AG04449 (cell line): ENCODE measurements at regions of chr5 and their contacts with region 1.

Region 1: GRCh38 chr5:150560401-150561193 is 52.7 kb downstream of the NDST1 start:
- DNase-seq: no peak
- H3K4me3 ChIP-seq: no peak overlapping the region
- CTCF ChIP-seq: peak; percentile 76

Region 2: DNA sequence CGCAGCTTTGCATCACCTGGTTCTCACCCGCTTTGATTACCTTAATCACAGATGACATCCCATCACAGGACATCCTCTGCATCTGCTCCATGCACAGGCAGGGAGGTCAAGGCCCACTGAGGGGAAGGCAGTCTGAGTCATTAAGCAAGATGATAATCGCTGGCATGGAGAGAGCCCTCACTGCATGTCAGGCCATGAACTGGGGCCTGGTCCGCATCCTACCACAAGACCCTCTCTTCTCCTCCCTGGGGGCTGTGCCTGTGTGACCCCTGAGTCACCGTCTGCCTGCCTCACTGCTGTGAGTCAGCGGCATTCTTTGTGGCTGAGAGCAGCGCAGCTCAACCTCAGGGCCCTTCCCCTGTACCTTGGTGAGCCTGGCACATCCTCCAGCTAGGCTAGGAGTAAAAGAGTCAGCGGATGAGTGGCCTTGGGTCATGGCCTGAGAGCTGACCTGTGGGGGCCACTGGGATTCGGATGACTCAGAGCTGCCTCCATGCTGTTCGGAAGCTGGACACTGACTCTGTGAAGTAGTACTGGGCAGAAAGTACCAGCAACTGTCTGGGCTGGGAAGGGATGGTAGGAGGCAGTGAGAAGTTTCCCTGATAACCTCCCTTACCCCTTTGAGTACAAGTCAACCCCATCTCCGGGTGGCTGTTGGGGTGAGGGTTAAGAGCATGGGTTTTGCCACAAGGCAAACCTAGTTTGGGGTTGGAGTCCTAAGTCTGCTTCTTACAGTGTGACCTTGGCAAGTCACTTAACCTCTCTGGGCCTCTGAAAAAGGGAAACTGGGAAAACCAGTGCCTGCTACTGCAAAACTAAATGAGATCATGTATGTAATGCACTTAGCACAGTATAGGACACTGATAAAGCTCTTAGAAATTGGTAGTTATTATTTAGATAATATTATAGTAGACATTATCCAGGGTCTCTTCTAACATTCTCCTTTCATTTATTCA is 243.3 kb before region 1 on chr5:
- CTCF ChIA-PET with region 1: no interaction called
- POLR2A ChIA-PET with region 1: no interaction called
- DNase-seq: no peak
- H3K4me3 ChIP-seq: no peak overlapping the region
- CTCF ChIP-seq: no peak

Region 3: DNA sequence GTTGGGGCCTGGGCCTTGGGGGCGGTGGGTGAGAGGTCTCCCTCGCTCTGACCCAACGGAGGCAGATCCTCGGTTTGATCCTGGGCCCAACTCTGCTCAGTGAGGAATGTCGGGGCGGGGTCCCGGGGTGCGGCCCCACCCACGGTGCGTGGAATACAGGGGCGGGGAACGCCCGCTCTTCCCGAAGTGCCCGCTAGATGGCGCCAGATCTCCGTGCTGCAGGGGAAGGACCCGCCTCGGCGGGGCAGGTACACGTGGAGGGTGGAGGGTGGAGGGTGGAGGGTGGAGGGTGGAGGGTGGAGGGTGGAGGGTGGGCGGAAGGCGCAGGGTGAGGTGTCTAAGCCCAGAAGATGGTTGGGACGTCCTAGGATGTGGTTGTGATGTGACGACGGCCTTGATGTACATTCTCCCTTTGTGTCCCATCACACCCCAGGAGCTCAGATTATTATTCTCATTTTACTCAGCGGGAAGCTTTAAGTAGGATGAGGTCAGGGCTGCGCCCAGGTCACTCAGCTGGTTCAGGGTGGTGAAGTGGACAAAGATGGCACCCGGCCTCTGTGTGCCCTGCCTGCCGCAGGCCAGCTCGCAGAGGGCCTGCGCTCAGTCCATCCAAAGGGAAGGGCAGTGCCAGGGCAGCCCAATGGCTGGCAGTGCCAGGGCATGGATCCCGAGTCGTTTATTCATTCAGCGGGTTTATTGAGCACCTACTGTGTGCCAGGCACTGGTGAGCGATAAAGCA is 101.6 kb before region 1 on chr5:
- CTCF ChIA-PET with region 1: interaction called, 157 read pairs
- POLR2A ChIA-PET with region 1: interaction called, 3 read pairs
- DNase-seq: no peak
- H3K4me3 ChIP-seq: peak overlapping the region; percentile 18
- CTCF ChIP-seq: peak; percentile 93

Region 4: GRCh38 chr5:150585781-150586341 is 25.3 kb after region 1 on chr5:
- CTCF ChIA-PET with region 1: interaction called, 14 read pairs
- POLR2A ChIA-PET with region 1: no interaction called
- DNase-seq: no peak
- H3K4me3 ChIP-seq: no peak overlapping the region
- CTCF ChIP-seq: no peak

Region 5: GRCh38 chr5:150656191-150657132 is 95.9 kb after region 1 on chr5:
- CTCF ChIA-PET with region 1: interaction called, 366 read pairs
- POLR2A ChIA-PET with region 1: no interaction called
- DNase-seq: no peak
- H3K4me3 ChIP-seq: peak overlapping the region; percentile 59
- CTCF ChIP-seq: peak; percentile 78

Region 6: DNA sequence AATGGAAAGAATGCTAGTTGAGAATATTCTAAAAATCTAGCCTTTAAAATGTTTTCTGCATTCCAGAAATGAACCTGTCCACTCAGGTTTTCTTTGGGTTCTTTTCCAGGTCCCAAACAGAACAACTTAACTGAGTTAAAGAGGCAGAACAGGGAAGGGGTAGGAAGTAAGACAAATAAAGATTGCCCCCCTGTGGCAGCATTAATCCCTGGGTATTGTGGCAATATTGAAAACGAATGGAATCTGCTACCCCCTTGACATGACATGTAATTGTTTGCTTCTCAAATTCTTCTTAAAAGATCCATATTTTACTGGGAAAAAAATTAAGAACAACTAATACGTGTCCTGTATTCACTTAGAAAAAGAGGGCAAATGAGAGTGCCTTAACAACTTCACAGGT is 149.6 kb after region 1 on chr5:
- CTCF ChIA-PET with region 1: interaction called, 17 read pairs
- POLR2A ChIA-PET with region 1: no interaction called
- DNase-seq: no peak
- H3K4me3 ChIP-seq: no peak overlapping the region
- CTCF ChIP-seq: peak; percentile 8

Region 7: DNA sequence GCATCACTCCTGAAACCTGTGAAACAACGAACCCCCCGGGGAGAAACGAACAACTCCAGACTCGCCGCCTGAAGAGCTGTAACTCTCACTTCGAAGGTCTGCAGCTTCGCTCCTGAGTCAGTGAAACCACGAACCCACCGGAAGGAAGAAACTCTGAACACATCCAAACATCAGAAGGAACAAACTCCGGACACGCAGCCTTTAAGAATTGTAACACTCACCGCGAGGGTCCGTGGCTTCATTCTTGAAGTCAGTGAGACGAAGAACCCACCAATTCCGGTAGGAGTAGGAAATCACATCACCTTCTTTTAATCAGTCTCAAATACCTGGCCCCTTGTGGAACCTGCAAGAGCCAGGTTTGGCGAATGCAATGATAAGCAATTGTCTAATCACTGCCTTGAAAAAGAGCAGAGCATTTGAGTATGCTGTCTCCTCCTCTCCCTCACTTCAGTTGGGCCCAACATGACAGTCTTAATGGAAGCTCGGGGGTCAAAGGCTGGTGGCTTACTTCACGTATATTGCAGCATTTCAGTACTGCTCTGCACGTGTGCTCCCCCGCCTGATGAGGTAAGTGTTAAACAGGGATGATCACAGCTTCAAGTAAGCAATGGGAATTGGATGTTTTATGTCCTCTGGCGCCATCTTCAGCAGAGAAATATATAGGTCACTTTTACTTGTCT is 286.2 kb after region 1 on chr5:
- CTCF ChIA-PET with region 1: interaction called, 13 read pairs
- POLR2A ChIA-PET with region 1: no interaction called
- DNase-seq: peak; percentile 52
- H3K4me3 ChIP-seq: no peak overlapping the region
- CTCF ChIP-seq: peak; percentile 49